A673 (cell line): ENCODE measurements at regions of chr12 and their contacts with region 1.

Region 1: DNA sequence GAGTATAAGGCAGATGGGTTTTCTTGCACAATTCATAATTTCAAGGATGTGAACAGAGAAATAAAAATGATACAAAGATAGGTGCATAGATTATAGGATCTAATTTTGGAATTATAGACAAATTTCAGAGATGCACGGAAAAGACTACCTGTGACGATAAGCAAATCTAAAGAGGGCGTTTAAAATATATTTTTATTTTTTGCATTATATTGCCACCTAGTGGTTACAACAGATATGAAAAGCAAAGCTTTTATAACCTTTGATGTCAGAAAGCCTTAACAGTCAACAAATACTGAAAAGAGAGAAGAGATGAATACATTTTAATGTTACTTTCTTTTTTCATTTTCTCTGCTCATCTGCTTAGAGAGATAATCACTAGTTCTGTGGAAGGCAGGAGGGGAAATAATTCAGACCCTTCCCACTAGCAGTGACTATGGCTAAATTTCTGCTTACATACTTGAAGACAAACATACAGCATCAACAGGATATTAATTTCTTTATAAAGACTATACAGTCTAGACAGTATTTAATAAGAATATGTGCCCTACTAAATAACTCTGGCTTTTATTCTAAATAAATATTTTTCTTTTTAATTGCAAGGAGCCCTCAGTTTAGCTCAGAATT is 46.3 kb downstream of the NTS start:
- DNase-seq: peak; percentile 69
- H3K4me3 ChIP-seq: no peak overlapping the region
- H3K27ac ChIP-seq: no peak overlapping the region
- H3K4me1 ChIP-seq: peaks cover 3% of the 10 kb centered on the region
- H3K27me3 ChIP-seq: no peaks in the 10 kb centered on the region
- CTCF ChIP-seq: peak; percentile 69

Region 2: GRCh38 chr12:85076688-85077430 is 843.6 kb before region 1 on chr12:
- CTCF ChIA-PET with region 1: no interaction called
- POLR2A ChIA-PET with region 1: no interaction called
- intact Hi-C with region 1: loop called (anchors 5 kb)
- DNase-seq: peak; percentile 80
- H3K4me3 ChIP-seq: no peak overlapping the region
- H3K27ac ChIP-seq: no peak overlapping the region
- H3K4me1 ChIP-seq: no peaks in the 10 kb centered on the region
- H3K27me3 ChIP-seq: no peaks in the 10 kb centered on the region
- CTCF ChIP-seq: peak; percentile 68

Region 3: DNA sequence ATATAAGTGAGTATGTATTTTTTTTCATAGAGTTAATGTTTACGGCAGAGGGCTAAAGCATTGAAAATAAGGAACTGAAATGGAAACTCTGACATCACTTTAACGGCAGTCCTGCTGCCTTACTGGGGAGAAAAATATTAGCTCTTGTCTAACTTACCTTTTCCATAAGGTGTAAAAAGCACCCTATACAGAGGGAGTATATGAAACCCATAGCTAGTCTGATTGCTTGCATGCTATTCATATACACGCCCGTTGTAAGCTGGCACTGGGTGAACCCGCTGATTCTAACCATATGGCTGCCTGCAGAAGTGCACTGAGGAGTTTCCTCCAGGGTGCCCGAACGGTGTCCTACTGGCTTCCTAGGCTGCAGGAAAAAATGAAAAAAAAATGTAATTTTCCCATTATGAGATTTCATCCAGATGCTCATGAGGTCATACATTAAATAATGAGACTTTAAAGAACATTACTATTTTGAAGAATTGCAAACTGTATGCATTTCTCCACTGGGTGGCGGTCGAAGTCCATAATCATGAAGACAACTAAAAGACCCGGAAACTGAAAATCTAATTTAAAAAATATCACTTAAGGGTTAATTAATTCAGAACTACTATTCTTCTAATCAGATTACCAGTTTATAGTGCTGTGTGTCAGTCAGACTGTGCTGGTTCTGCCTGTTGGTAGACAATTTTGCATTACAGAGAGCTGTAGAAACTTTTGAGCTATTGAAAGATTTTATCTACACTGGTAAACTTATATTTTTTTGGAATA is 495.7 kb before region 1 on chr12:
- CTCF ChIA-PET with region 1: no interaction called
- POLR2A ChIA-PET with region 1: no interaction called
- intact Hi-C with region 1: loop called (anchors 2 kb)
- DNase-seq: peak; percentile 88
- H3K4me3 ChIP-seq: no peak overlapping the region
- H3K27ac ChIP-seq: no peak overlapping the region
- H3K4me1 ChIP-seq: peaks cover 24% of the 10 kb centered on the region
- H3K27me3 ChIP-seq: no peaks in the 10 kb centered on the region
- CTCF ChIP-seq: peak; percentile 84

Region 4: GRCh38 chr12:85468356-85469157 is 451.9 kb before region 1 on chr12:
- CTCF ChIA-PET with region 1: interaction called, 12 read pairs
- POLR2A ChIA-PET with region 1: no interaction called
- intact Hi-C with region 1: loop called (anchors 1 kb)
- DNase-seq: peak; percentile 83
- H3K4me3 ChIP-seq: no peak overlapping the region
- H3K27ac ChIP-seq: peak overlapping the region; percentile 6
- H3K4me1 ChIP-seq: peaks cover 44% of the 10 kb centered on the region
- H3K27me3 ChIP-seq: no peaks in the 10 kb centered on the region
- CTCF ChIP-seq: peak; percentile 83

Region 5: DNA sequence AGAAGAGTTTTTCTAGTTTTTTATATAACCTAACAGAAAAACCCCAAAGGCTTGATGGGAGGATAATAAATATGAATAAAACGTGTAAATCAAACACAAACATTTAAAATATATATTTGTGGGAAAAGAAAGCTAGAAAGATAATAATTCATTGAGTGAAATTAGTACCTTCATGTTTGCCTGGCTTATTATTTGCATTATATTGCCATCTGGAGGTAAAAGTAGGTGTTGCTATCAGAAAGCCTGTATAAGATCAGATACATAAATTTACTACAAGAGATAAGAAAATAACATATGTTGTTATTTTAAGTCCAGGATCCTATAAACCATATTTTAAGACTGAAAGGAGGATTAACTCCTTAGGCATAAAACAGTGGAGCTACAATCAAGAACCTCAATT is 31.4 kb after region 1 on chr12:
- CTCF ChIA-PET with region 1: no interaction called
- POLR2A ChIA-PET with region 1: no interaction called
- intact Hi-C with region 1: loop called (anchors 2 kb)
- DNase-seq: peak; percentile 66
- H3K4me3 ChIP-seq: no peak overlapping the region
- H3K27ac ChIP-seq: no peak overlapping the region
- H3K4me1 ChIP-seq: peaks cover 56% of the 10 kb centered on the region
- H3K27me3 ChIP-seq: no peaks in the 10 kb centered on the region
- CTCF ChIP-seq: peak; percentile 72

Region 6: DNA sequence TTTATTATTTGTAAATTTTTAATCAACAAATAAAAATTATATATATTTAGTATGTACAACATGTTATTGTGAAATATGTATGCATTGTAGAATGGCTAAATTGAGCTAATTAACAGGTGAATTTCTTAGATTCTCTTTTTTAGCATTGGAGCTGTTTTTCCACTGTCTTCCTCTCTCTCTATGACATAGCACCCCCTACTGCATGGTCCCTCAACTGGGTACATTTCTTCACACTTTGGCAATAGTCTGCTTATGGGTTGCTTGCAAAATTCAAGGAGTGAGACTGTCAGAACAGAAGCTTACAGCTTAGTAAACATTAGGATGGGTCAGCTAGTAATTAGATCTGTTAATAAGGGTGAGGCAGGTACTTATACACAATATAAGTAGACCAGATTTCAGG is 994.3 kb after region 1 on chr12:
- CTCF ChIA-PET with region 1: no interaction called
- POLR2A ChIA-PET with region 1: no interaction called
- intact Hi-C with region 1: loop called (anchors 10 kb)
- DNase-seq: peak; percentile 62
- H3K4me3 ChIP-seq: no peak overlapping the region
- H3K27ac ChIP-seq: no peak overlapping the region
- H3K4me1 ChIP-seq: no peaks in the 10 kb centered on the region
- H3K27me3 ChIP-seq: no peaks in the 10 kb centered on the region
- CTCF ChIP-seq: peak; percentile 67

Region 7: DNA sequence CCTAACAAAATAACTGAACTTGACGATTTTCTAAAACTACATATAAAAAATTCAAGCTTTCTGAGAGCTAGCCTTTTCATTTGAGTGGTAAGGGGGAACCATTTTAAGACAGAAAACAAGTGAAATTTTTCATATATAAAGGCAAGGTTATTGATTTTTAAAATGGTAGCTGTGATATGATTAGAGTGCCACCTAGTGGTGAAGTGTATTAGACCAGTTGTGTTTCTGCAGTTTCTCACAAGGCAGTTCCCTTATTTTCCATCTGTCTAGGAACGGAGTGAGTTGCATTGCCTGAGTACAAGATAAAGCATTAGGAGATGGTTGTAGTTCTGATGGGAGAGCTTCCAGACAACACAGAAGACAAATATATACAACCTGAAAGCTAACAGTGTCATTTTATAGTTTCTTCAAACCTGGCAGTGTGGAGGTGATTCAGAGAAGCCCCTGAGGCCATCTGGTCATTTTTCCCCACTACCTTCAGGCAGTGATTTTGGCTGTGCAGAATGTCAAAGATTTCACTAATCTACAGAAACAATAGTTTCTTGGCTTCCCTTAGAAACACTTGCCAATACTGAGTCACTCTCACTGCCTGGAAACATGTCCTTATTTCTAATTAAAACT is 1927.9 kb after region 1 on chr12:
- CTCF ChIA-PET with region 1: no interaction called
- POLR2A ChIA-PET with region 1: no interaction called
- intact Hi-C with region 1: loop called (anchors 10 kb)
- DNase-seq: peak; percentile 68
- H3K4me3 ChIP-seq: no peak overlapping the region
- H3K27ac ChIP-seq: no peak overlapping the region
- H3K4me1 ChIP-seq: no peaks in the 10 kb centered on the region
- H3K27me3 ChIP-seq: no peaks in the 10 kb centered on the region
- CTCF ChIP-seq: peak; percentile 87